Psoas muscle (tissue), 8 donors: ENCODE measurements at regions of chr1 and their contacts with region 1.

Region 1: GRCh38 chr1:37989361-37989930 is 376 bp downstream of the SF3A3 start:
- DNase-seq: peak; percentile 40 to 75
- ATAC-seq: peak; percentile 10 to 20 (median 12)
- H3K4me3 ChIP-seq: peak overlapping the region; percentile 76
- H3K27ac ChIP-seq: peak overlapping the region; percentile 76
- H3K4me1 ChIP-seq: peaks cover 27% of the 10 kb centered on the region
- H3K27me3 ChIP-seq: no peaks in the 10 kb centered on the region
- CTCF ChIP-seq: no peak

Region 2: DNA sequence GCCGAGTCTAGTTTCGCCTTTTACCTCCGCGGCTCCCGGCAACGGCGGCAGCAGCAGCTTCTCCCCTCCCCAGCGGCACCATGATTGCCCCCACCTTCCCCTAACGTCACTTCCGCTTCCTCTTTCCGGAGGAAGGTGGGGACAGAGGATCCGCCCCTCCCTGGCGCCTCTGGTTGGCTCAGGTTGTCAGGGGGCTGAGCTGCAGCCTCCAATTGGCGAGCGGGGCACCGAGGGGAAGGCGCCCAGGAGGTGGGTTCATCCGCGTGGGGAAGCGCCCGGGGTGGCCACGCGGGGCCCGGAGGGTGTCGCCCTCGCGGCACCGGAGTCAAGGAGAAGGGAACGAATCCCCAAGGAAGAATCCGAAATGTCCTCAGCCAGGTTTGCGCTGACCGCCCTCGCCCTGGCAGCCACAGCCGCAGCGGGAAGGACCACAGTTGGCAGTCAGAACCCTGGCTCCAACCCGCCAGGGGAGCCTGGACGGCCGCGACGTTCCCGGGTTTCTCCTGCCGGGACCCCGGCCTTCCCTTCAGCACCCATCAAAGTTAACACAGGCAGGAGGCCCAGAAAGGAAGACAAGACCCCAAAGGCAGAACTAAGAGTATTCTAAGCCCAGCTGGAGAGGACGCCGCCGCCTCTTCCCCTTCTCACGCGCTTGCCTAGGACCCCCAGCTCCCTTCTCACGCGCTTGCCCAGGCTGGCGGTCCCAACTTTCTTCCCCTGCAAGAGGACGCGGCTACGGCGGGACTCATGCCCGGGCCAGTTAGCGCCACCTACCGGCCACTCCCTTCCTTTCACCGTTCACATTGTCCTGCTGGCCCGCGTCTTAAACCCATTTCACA is 129.7 kb before region 1 on chr1 and contains the start of gene MTF1:
- intact Hi-C with region 1: no loop called
- DNase-seq: peak; percentile 97 to 99
- ATAC-seq: peak; percentile 98 to 99 (median 98)
- H3K4me3 ChIP-seq: peak within 1 kb of the TSS; percentile 99
- H3K27ac ChIP-seq: peak within 1 kb of the TSS; percentile 95
- H3K4me1 ChIP-seq: peaks cover 33% of the 10 kb centered on the region
- H3K27me3 ChIP-seq: no peaks in the 10 kb centered on the region
- CTCF ChIP-seq: peak; percentile 91
- total RNA-seq, gene MTF1: 13.3 to 18.8 (median 14.0) TPM

Region 3: GRCh38 chr1:38018864-38019343 is 29.5 kb after region 1 on chr1:
- intact Hi-C with region 1: loop called in 1 of 2 experiments (anchors 2 kb)
- DNase-seq: no peak
- ATAC-seq: no peak
- H3K4me3 ChIP-seq: peak overlapping the region; percentile 51
- H3K27ac ChIP-seq: peak overlapping the region; percentile 98
- H3K4me1 ChIP-seq: peaks cover 96% of the 10 kb centered on the region
- H3K27me3 ChIP-seq: no peaks in the 10 kb centered on the region
- CTCF ChIP-seq: peak; percentile 67